ENCODE measurements at regions of chr2 and their contacts with region 1.

Region 1: GRCh38 chr2:58967736-58968135 is 726.6 kb upstream of the FANCL start:
- DNase-seq: no peak
- H3K4me3 ChIP-seq: no peak overlapping the region
- CTCF ChIP-seq: no peak

Region 2: DNA sequence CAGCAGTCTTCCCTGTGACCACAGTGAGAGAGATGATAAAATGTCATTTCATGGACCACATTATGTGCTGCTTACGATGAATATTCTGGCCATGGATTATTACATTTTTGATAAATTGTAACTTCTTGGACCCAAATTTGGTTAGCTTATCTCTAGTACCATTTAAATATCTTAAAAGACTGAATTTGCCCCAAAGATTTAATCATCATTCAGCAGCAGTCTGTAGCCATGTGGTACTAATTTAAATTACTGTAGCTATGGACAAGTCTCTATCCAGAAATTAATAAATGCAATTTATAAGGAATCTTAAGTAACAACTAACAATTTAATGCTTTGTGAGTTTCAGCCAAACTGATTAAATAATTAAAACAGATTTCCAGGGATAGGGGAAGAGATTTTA is 81.7 kb before region 1 on chr2:
- in situ Hi-C with region 1: no loop called
- DNase-seq: no peak
- H3K4me3 ChIP-seq: no peak overlapping the region
- CTCF ChIP-seq: no peak

Region 3: DNA sequence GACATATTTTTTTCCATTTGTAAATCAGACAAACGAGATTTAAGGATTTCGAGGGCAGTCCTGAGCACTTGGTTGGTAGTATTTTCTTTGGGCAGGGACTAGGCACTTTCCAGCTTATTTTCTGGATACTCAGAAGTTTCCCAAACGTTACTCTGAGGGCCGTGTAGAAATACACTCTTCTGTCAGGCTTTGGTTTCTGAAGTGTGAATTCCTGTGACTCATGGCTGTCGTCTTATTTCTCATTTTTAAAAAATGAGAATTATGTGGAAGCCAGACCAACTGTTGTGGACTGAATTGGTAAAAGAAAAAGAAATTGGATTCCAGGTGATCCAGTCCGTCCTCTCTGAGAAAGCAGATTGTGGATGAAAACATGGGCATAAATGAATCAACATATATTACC is 68.0 kb before region 1 on chr2:
- in situ Hi-C with region 1: no loop called
- DNase-seq: no peak
- H3K4me3 ChIP-seq: no peak overlapping the region
- CTCF ChIP-seq: no peak

Region 4: DNA sequence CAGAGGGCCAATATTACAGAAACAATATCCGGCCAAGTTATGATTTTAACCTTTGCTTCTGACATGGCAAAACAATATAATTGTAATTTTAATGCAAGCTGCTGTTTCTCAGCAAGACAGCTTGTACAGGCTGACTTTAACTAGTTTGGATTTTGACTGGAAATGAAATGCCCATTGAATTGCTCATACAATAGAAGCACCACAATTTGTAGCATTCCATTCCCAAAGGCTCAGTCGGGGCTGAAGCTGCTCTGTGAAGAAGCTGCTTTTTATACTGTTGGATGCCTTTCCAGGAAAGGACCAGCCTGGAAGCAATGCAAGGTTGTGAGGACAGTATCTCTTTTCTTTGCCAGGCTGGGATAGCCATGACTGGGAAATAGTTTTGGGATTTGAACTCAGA is 49.6 kb before region 1 on chr2:
- in situ Hi-C with region 1: loop called (anchors 5 kb)
- DNase-seq: peak; percentile 35
- H3K4me3 ChIP-seq: no peak overlapping the region
- CTCF ChIP-seq: no peak

Region 5: GRCh38 chr2:59176737-59177136 is 209.0 kb after region 1 on chr2:
- in situ Hi-C with region 1: no loop called
- DNase-seq: no peak
- H3K4me3 ChIP-seq: no peak overlapping the region
- CTCF ChIP-seq: no peak